Transverse colon (tissue), 4 donors: ENCODE measurements at regions of chr4 and their contacts with region 1.

Region 1: DNA sequence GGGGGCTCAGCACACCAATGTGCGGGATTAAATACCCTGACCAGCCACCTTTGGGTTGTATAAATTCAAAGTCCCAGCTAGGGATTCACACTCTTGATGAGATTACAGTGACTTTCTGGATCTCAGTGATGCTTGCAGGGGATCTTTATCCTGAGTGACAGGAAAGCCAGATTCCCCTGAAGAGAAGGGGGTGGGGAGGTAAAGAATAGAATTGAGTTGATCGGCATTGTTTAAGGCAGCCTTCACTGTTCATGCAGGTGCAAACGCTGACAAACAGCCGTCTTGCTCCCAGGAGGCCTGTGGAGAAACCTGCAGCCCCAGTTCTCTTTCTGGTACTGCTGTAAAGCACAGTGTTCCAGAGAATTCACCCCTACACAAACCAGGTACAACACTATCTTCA is 19.0 kb downstream of the CXXC4 start:
- DNase-seq: no peak
- H3K4me3 ChIP-seq: no peak overlapping the region
- H3K27ac ChIP-seq: no peak overlapping the region
- H3K4me1 ChIP-seq: no peaks in the 10 kb centered on the region
- H3K27me3 ChIP-seq: no peaks in the 10 kb centered on the region
- CTCF ChIP-seq: no peak
- EP300 ChIP-seq: no peak
- POLR2A ChIP-seq: no peak

Region 2: DNA sequence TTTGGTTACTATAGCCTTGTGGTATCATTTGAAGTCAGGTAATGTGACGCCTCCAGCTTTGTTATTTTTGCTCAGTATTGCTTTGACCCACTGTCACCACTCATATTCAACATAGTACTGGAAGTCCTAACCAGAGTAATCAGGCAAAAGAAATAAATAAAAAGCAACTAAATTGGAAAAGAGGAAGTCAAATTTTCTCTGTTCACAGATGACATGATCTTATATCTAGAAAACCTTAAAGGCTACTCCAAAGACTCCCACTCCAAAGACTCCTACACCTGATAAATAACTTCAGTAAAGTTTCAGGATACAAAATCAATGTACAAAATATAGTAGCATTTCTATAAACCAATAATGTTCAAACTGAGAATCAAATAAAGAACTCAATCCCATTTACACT is 329.6 kb before region 1 on chr4:
- in situ Hi-C with region 1: no loop called
- intact Hi-C with region 1: no loop called
- DNase-seq: no peak
- H3K4me3 ChIP-seq: no peak overlapping the region
- H3K27ac ChIP-seq: no peak overlapping the region
- H3K4me1 ChIP-seq: no peaks in the 10 kb centered on the region
- H3K27me3 ChIP-seq: no peaks in the 10 kb centered on the region
- CTCF ChIP-seq: no peak
- EP300 ChIP-seq: no peak
- POLR2A ChIP-seq: no peak

Region 3: DNA sequence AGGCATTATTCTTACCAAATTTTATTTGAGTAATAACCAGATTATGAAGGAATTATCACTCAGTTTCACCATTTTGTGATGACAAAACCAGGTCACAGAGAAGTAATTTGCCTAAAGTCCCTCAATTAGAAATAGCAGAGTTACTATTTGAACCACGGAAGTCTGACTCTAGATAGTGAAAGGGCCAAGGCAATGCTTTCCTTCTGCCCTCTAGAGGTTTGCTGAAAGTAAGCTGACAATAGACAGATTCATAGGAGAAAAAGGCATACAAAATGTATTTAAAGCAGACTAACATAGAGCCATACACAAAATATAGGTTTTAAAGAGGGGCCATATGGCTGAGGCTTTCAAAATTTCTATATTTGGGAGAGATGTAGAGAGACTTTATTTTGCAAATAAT is 24.1 kb before region 1 on chr4:
- in situ Hi-C with region 1: no loop called
- intact Hi-C with region 1: loop called (anchors 1 kb)
- DNase-seq: no peak
- H3K4me3 ChIP-seq: no peak overlapping the region
- H3K27ac ChIP-seq: no peak overlapping the region
- H3K4me1 ChIP-seq: peaks cover 0 to 9% (median 0%) of the 10 kb centered on the region in 4 donors
- H3K27me3 ChIP-seq: no peaks in the 10 kb centered on the region
- CTCF ChIP-seq: peak; percentile 34 to 42 (median 40)
- EP300 ChIP-seq: no peak
- POLR2A ChIP-seq: no peak

Region 4: DNA sequence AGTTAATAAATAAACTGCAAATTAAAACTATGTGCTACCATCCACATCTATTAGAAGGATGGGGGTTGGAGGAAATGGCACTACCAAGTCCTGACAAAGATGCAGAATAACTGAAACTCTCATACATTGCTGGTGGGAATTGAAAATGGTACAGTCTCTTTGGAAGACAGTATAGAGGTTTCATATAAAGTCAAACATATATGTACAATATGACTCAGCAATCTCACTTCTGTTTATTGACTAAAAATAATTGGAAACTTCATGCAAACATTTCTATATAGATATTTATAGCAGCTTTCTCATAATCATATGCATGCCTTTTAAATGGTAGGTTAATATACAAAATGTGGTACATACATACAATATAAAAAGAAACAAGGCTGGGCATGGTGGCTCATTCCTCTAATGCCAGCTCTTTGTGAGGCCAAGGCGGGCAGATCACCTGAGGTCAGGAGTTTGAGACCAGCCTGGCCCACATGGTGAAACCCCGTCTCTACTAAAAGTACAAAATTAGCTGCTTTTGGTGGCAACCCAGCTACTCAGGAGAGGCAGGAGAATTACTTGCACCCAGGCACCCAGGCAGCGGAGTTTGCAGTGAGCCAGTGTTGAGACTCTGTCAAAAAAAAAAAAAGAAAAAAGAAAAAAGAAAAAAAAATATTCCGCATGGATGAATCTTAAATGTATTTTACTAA is 244.0 kb after region 1 on chr4:
- in situ Hi-C with region 1: no loop called
- intact Hi-C with region 1: loop called (anchors 5 kb)
- DNase-seq: no peak
- H3K4me3 ChIP-seq: no peak overlapping the region
- H3K27ac ChIP-seq: no peak overlapping the region
- H3K4me1 ChIP-seq: no peaks in the 10 kb centered on the region
- H3K27me3 ChIP-seq: no peaks in the 10 kb centered on the region
- CTCF ChIP-seq: no peak
- EP300 ChIP-seq: no peak
- POLR2A ChIP-seq: no peak